ENCODE measurements at regions of chr11 and their contacts with region 1.

Region 1: GRCh38 chr11:4508886-4509285 is 26.4 kb downstream of the OR52K1 start:
- DNase-seq: no peak
- H3K4me3 ChIP-seq: no peak overlapping the region
- H3K27ac ChIP-seq: no peak overlapping the region
- H3K4me1 ChIP-seq: no peaks in the 10 kb centered on the region
- H3K27me3 ChIP-seq: no peaks in the 10 kb centered on the region
- CTCF ChIP-seq: no peak

Region 2: GRCh38 chr11:4375431-4376140 is 133.3 kb before region 1 on chr11:
- CTCF ChIA-PET with region 1: no interaction called
- dilution Hi-C with region 1: loop called (anchors 5 kb)
- in situ Hi-C with region 1: no loop called
- intact Hi-C with region 1: no loop called
- DNase-seq: no peak
- H3K4me3 ChIP-seq: no peak overlapping the region
- H3K27ac ChIP-seq: no peak overlapping the region
- H3K4me1 ChIP-seq: no peaks in the 10 kb centered on the region
- H3K27me3 ChIP-seq: peaks cover 9% of the 10 kb centered on the region
- CTCF ChIP-seq: no peak

Region 3: DNA sequence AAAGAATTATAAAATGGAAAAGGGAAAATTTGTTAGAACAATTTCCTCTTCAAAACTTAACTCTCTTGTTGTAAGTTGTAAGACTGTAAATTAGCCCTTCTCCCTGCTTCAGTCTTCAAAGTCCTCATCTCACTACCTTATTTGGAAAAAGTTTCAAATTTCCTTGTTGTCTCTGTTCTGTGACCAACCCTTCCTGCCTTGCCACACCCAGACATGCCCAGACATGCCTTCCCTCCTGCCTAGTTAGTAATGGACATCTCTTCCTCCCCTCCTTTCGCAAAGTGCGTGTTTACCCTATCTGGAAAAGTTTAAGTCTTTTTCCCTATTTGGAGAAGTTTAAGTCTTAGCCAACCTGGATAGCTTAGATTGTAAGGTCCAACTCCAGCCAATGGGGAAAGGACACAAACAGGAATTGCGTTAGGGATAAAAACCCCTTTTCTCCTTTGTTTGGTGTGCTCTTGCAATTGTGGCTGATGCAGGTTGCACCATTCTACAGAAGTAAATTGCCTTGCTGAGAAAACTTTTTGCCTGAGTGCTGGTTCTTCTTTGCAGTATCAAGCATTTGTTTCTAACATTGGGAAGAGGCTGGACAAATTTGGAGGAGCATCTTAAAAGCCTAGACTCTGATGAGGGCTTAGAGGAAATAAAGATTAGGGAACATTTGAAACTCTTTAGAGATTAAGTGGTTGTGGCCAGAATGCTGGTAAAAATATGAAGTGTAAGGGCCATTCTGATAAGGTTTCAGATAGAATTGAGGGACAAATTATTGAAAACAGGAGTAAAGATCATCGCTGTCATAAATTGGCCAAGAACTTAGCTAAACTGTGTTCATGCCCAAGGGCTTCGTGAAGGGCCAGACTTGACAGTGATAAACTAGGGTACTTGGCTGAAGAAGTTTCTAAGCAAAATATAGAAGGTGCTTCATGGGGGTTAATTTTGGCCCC is 44.4 kb before region 1 on chr11:
- CTCF ChIA-PET with region 1: no interaction called
- dilution Hi-C with region 1: loop called (anchors 5 kb)
- in situ Hi-C with region 1: no loop called
- intact Hi-C with region 1: no loop called
- DNase-seq: peak; percentile 75
- H3K4me3 ChIP-seq: no peak overlapping the region
- H3K27ac ChIP-seq: no peak overlapping the region
- H3K4me1 ChIP-seq: peaks cover 3% of the 10 kb centered on the region
- H3K27me3 ChIP-seq: no peaks in the 10 kb centered on the region
- CTCF ChIP-seq: no peak

Measured in mammary epithelial cell (primary cell).